WTC11 (cell line): ENCODE measurements at regions of chr20 and their contacts with region 1.

Region 1: DNA sequence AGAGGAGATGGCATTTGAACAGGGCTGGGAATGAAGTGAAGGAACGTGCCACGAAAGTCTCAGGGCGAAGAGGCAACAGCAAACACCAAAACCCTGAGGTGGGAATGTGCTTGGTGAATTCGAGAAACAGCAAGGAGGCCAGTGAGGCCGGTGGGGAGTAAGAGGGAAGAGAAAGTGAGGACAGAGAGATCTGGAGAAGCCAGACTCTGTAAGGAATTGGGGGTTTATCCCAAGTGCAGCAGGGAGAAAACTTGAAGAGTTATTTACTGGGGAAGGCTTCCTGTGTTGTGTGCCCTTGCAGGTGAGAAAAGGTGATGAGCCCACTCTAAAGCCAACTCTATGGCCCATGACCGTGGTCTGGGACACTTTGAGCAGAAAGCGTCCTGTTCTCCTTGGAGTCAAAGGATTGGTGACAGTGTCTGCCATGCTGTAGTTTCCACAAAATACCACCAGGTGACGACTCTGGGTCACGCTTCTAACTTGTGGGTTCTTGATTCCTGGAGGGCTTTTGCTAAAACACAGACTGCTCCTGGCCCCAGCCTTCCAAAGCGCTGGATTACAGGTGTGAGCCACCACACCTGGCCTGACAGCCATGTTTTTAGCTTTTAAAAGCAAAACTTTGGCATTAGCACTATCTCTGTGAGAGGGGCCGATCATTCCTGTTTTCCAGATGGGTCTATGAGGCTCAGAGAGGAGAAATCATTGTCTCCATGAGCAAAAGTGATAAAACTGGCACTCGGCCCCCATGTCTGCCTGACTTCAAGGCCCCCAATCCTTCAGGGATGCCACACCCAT is 18.0 kb upstream of the CSNK2A1 start:
- DNase-seq: peak; percentile 83
- ATAC-seq: peak; percentile 96
- H3K4me3 Mint-ChIP-seq: no peak overlapping the region
- H3K27ac Mint-ChIP-seq: no peak overlapping the region
- H3K4me1 Mint-ChIP-seq: no peaks in the 10 kb centered on the region
- H3K27me3 Mint-ChIP-seq: no peaks in the 10 kb centered on the region
- CTCF ChIP-seq: peak; percentile 88

Region 2: GRCh38 chr20:571754-572441 is 10.3 kb after region 1 on chr20:
- CTCF ChIA-PET with region 1: interaction called, 31 read pairs
- POLR2A ChIA-PET with region 1: interaction called, 3 read pairs
- DNase-seq: peak; percentile 60
- ATAC-seq: peak; percentile 53
- H3K4me3 Mint-ChIP-seq: peak overlapping the region; percentile 22
- H3K27ac Mint-ChIP-seq: no peak overlapping the region
- H3K4me1 Mint-ChIP-seq: peaks cover 56% of the 10 kb centered on the region
- H3K27me3 Mint-ChIP-seq: peaks cover 6% of the 10 kb centered on the region; the same call in 1 of the 2 replicates
- CTCF ChIP-seq: no peak

Region 3: GRCh38 chr20:623704-624103 is 62.1 kb after region 1 on chr20:
- CTCF ChIA-PET with region 1: no interaction called
- POLR2A ChIA-PET with region 1: no interaction called
- DNase-seq: no peak
- ATAC-seq: no peak
- H3K4me3 Mint-ChIP-seq: no peak overlapping the region
- H3K27ac Mint-ChIP-seq: no peak overlapping the region
- H3K4me1 Mint-ChIP-seq: peaks cover 13% of the 10 kb centered on the region
- H3K27me3 Mint-ChIP-seq: no peaks in the 10 kb centered on the region; the same call in 1 of the 2 replicates
- CTCF ChIP-seq: no peak